Adrenal gland (tissue), 19 donors: ENCODE measurements at regions of chr12 and their contacts with region 1.

Region 1: GRCh38 chr12:57319678-57320469 is 68.9 kb upstream of the STAC3 start:
- DNase-seq: peak in 2 of 7 donors; percentile 16 to 23
- H3K4me3 ChIP-seq: no peak overlapping the region
- H3K27ac ChIP-seq: peak overlapping the region in 2 of 5 donors; percentile 44 to 58
- H3K4me1 ChIP-seq: peaks cover 0 to 15% of the 10 kb centered on the region in 2 donors
- H3K27me3 ChIP-seq: no peaks in the 10 kb centered on the region
- CTCF ChIP-seq: no peak
- POLR2A ChIP-seq: no peak

Region 2: DNA sequence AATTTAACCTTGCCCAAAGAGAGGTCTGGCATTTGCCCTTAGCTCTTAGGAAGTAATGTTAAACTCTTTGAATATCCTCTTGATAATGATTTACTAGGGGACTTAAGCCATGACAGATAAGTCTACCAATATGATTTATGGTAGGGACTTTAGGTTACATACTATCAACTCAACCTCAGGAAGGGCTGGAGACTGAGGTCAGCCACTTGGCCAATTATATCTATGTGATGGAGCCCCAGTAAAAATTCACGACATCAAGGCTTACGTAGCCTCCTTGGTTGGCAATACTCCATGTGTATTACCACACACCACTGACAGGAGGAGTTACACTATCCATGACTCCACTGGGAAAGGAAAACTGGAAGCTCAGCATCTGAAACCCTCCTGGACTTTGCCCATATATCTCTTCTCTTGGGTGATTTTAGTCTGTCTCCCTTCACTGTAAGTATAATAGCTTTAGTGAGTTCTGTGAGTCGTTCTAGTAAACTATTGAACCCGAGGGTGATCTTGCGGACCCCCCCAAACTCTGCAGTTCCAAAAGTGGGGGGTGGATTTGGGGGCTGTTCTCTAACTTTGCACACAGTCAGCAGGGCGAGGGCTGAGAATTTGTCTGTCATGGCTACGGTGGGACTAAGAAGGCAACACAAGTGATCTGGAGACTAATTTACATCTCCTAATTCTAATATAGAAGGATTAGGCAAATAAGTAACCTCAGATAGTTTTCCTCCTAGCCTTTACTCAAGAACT is 48.6 kb after region 1 on chr12:
- intact Hi-C with region 1: loop called in 1 of 2 experiments (anchors 10 kb)
- DNase-seq: peak in 2 of 7 donors; percentile 40 to 44
- H3K4me3 ChIP-seq: no peak overlapping the region
- H3K27ac ChIP-seq: no peak overlapping the region
- H3K4me1 ChIP-seq: peaks cover 0 to 13% of the 10 kb centered on the region in 2 donors
- H3K27me3 ChIP-seq: no peaks in the 10 kb centered on the region
- CTCF ChIP-seq: peak in 2 of 6 experiments; percentile 10 to 15
- POLR2A ChIP-seq: no peak